A549 (cell line): ENCODE measurements at regions of chr7 and their contacts with region 1.

Region 1: DNA sequence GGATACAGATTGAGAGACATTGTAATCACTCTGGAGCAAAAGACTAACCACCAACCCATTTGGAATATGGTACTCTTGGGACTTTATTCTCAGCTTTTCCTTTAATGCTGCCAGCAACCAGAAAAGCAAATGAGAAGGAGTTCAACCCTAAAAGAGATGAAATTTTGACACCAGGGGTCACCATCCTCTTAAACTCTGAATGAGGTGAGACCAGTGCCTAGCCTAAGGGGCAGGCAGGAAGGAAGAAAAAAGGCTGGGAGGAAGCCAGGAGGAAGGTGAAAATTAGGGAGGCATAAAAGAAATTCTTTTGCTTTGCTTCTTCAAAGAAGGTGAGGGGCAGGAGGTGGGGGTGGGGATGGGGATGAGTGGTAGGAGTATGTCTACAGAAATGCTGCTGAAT is 135.8 kb downstream of the JAZF1 start:
- DNase-seq: no peak
- ATAC-seq: no peak
- H3K4me3 ChIP-seq: no peak overlapping the region
- H3K27ac ChIP-seq: peak overlapping the region; percentile 90 to 92
- H3K4me1 ChIP-seq: peaks cover 46% of the 10 kb centered on the region
- CTCF ChIP-seq: peak; percentile 18; the same call in 1 of the 3 replicates
- EP300 ChIP-seq: no peak
- POLR2A ChIP-seq: no peak
- RAD21 ChIP-seq: peak in 1 of 2 experiments; percentile 42; a peak in 2 of 5 replicates

Region 2: GRCh38 chr7:27723085-27723484 is 321.7 kb before region 1 on chr7:
- CTCF ChIA-PET with region 1: no interaction called
- POLR2A ChIA-PET with region 1: no interaction called
- DNase-seq: peak in 1 of 2 experiments; percentile 59
- ATAC-seq: peak; percentile 99
- H3K4me3 ChIP-seq: no peak overlapping the region
- H3K27ac ChIP-seq: no peak overlapping the region
- H3K4me1 ChIP-seq: no peaks in the 10 kb centered on the region; the same call in 2 of the 3 replicates
- CTCF ChIP-seq: peak; percentile 34; the same call in 2 of the 3 replicates
- EP300 ChIP-seq: no peak
- POLR2A ChIP-seq: no peak
- RAD21 ChIP-seq: peak; percentile 40 to 50; a peak in 3 of 5 replicates

Region 3: GRCh38 chr7:28062197-28062991 is 17.6 kb after region 1 on chr7:
- CTCF ChIA-PET with region 1: interaction called, 12 read pairs
- POLR2A ChIA-PET with region 1: no interaction called
- DNase-seq: peak; percentile 55 to 81
- ATAC-seq: peak; percentile 95 to 96
- H3K4me3 ChIP-seq: no peak overlapping the region
- H3K27ac ChIP-seq: peak overlapping the region; percentile 68 to 84
- H3K4me1 ChIP-seq: peaks cover 61% of the 10 kb centered on the region
- CTCF ChIP-seq: peak; percentile 75
- EP300 ChIP-seq: no peak
- POLR2A ChIP-seq: no peak
- RAD21 ChIP-seq: peak; percentile 68 to 78

Region 4: DNA sequence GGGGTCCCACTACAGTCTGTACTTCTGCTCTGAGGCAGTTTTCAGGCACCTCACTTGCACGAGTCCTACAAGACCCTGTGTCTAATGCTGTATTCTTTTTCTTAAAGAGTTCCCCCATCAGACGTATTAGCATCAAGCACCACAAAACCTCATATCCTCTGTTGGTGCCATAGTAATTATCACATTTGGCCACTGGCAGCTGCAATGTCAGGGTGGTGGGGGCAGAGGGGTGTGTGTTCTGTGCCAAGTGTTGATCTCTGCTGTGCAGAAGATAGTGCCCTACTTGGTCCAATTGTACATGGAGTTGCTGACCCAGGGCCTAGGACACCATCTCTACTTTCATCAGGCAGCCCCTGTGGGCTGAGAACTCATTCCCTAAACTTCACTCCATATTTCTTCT is 155.8 kb after region 1 on chr7:
- CTCF ChIA-PET with region 1: no interaction called
- POLR2A ChIA-PET with region 1: no interaction called
- DNase-seq: no peak
- ATAC-seq: no peak
- H3K4me3 ChIP-seq: no peak overlapping the region
- H3K27ac ChIP-seq: no peak overlapping the region
- H3K4me1 ChIP-seq: no peaks in the 10 kb centered on the region
- CTCF ChIP-seq: no peak
- EP300 ChIP-seq: no peak
- POLR2A ChIP-seq: no peak
- RAD21 ChIP-seq: no peak